Activated naive CD4-positive, alpha-beta T cell treated with anti-CD3 and anti-CD28 coated beads for 36 hours (primary cell): ENCODE measurements at regions of chr3 and their contacts with region 1.

Region 1: GRCh38 chr3:48439820-48440589 is at the starts of genes CCDC51 and TMA7:
- DNase-seq: peak; percentile 100
- H3K4me3 Mint-ChIP-seq: peak within 1 kb of the TSS; percentile 93
- H3K27ac Mint-ChIP-seq: peak within 1 kb of the TSS; percentile 96
- H3K4me1 Mint-ChIP-seq: peaks cover 44% of the 10 kb centered on the region
- H3K27me3 Mint-ChIP-seq: no peaks in the 10 kb centered on the region
- total RNA-seq, gene CCDC51: 16.4 to 17.4 TPM
- total RNA-seq, gene TMA7: 319 to 353 TPM

Region 2: DNA sequence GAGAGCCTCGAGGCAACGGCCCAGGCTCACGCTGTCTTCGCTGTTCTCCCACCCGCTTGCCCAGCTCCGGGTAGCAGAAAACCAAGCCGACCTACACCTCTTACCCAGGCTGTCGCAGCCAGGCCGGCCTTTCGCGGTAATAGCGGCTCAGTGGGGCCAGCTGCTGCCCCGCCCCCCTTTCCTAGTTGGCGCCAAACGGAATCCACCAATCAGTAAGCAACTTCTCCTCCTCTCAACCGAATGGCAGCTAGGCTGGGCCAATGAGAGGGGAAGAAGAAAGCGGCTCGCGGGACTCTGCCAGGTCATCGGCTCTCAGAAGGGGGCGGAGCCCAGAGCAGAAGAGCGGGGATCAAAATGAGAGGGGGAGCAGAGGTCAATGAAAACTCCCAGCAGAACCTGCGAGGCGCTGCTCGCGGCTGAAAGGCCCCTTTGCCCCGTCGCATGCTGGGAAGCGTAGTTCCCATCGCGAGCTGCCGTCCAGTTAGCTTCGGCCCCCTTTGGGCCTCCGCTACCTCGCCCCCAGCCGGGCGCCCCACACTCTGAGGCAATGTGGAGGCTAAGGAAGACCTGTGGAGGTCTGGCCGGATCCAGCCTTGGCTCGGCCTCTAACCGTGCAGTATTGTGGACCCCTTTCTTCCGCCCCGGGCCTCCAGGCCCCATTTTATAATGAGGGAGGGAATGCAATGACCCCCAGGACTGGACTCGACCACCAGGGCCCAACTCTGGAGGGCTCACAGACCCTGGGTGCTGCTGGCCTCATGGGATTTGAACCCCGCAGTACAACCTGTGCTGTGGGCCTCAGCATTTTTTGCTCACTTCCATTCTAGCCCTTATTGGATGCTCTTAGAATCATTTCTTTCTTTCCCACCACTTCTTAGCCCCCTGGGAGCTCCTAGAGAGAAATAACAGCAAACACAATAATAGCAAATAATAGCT is 251.5 kb before region 1 on chr3 and contains the start of gene CDC25A:
- CTCF ChIA-PET with region 1: interaction called, 11 read pairs
- intact Hi-C with region 1: loop called (anchors 1 kb)
- DNase-seq: peak; percentile 98
- H3K4me3 Mint-ChIP-seq: peak within 1 kb of the TSS; percentile 88
- H3K27ac Mint-ChIP-seq: peak within 1 kb of the TSS; percentile 61
- H3K4me1 Mint-ChIP-seq: peaks cover 17% of the 10 kb centered on the region
- H3K27me3 Mint-ChIP-seq: peaks cover 11% of the 10 kb centered on the region
- total RNA-seq, gene CDC25A: 40.8 to 41.8 TPM

Region 3: GRCh38 chr3:48240711-48241491 is 199.1 kb before region 1 on chr3 and contains the start of gene ZNF589:
- CTCF ChIA-PET with region 1: interaction called, 18 read pairs
- intact Hi-C with region 1: loop called (anchors 1 kb)
- DNase-seq: peak; percentile 96
- H3K4me3 Mint-ChIP-seq: peak within 1 kb of the TSS; percentile 88
- H3K27ac Mint-ChIP-seq: peak within 1 kb of the TSS; percentile 86
- H3K4me1 Mint-ChIP-seq: peaks cover 28% of the 10 kb centered on the region
- H3K27me3 Mint-ChIP-seq: no peaks in the 10 kb centered on the region
- total RNA-seq, gene ZNF589: 15.8 to 16.3 TPM

Region 4: DNA sequence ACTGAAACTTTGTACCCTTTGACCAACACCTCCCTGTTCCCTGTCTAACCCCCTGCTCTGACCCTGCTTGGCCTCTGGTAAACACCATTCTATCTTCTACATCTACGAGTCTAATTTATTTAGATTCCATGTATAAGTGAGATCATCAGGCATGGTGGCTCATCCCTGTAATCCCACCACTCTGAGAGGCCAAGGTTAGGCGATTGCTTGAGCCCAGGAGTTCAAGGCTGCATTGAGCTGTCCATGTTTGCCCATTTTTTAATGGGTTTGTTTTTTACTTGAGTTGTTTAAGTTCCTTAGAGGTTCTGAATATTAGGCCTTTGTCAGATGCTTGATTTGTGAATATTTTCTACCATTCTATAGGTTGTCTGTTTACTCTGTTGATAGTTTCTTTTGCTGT is 51.0 kb before region 1 on chr3:
- CTCF ChIA-PET with region 1: interaction called, 11 read pairs
- intact Hi-C with region 1: no loop called
- DNase-seq: no peak
- H3K4me3 Mint-ChIP-seq: no peak overlapping the region
- H3K27ac Mint-ChIP-seq: no peak overlapping the region
- H3K4me1 Mint-ChIP-seq: no peaks in the 10 kb centered on the region
- H3K27me3 Mint-ChIP-seq: peaks cover 2% of the 10 kb centered on the region

Region 5: GRCh38 chr3:48415554-48415953 is 24.5 kb before region 1 on chr3:
- CTCF ChIA-PET with region 1: interaction called, 14 read pairs
- intact Hi-C with region 1: no loop called
- DNase-seq: no peak
- H3K4me3 Mint-ChIP-seq: no peak overlapping the region
- H3K27ac Mint-ChIP-seq: no peak overlapping the region
- H3K4me1 Mint-ChIP-seq: no peaks in the 10 kb centered on the region
- H3K27me3 Mint-ChIP-seq: no peaks in the 10 kb centered on the region

Region 6: GRCh38 chr3:48507351-48508061 is 67.5 kb after region 1 on chr3:
- CTCF ChIA-PET with region 1: interaction called, 17 read pairs
- intact Hi-C with region 1: loop called (anchors 2 kb)
- DNase-seq: peak; percentile 82
- H3K4me3 Mint-ChIP-seq: peak overlapping the region; percentile 32
- H3K27ac Mint-ChIP-seq: peak overlapping the region; percentile 66
- H3K4me1 Mint-ChIP-seq: peaks cover 47% of the 10 kb centered on the region
- H3K27me3 Mint-ChIP-seq: no peaks in the 10 kb centered on the region